Activated T-helper 1 cell treated with anti-CD3 and anti-CD28 coated beads, Interleukin-12 subunit alpha, Interleukin-12 subunit beta, Interleukin-2, Interleukin-4 antibody, amounts not matched to agents 30 ng/mL and 10 ng/mL and 1 ng/mL, durations not matched to agents 14 hours and 24 hours and 36 hours (primary cell): ENCODE measurements at regions of chr1 and their contacts with region 1.

Region 1: DNA sequence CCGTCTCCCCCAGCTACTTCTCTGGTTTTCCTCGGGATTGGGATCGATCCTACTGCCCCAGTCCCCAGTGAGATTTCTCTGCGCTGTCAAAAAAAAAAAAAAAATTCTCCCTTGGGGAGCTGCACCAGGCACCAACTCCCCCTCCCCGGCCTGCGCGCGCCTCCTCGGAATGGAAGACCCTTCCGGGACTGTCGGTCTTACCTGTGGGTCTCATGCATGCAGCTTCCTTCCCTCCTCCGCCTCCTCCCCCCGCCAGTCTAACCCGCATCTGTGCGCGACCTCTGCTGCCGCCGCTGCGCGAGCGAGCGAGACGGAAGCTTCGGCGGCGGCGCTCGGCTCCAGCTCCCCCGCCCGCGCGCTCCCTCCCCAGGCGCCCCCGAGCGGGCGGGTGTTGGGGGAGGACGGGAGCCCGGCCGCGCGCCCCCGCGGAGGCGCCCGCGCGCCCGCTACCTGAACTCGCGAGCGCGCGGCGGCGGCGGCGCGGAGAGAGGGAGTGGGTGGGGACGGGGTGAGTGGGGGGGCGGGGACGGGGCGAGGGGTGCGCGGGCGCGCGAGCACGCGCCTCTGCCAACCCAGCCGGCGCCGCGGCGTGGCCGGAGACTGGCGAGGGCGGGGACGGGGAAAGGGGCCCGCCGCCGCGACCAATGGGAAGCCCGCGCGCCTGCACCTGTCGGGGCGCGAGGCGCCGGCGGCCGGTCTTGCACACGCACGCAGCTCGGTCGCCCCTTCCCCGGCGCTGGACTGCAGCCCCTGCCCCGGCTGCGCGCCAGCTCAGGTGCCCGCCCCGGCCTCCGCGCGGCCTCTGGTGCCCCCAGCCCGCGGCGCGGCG is at the start of gene SUSD4:
- DNase-seq: peak; percentile 13
- H3K4me3 Mint-ChIP-seq: peak within 1 kb of the TSS; percentile 77
- H3K27ac Mint-ChIP-seq: no peak within 1 kb of the TSS
- H3K4me1 Mint-ChIP-seq: no peaks in the 10 kb centered on the region
- H3K27me3 Mint-ChIP-seq: peaks cover 53% of the 10 kb centered on the region
- total RNA-seq, gene SUSD4: not detected in 2 replicates

Region 2: GRCh38 chr1:223199094-223199647 is 164.9 kb before region 1 on chr1:
- intact Hi-C with region 1: loop called (anchors 5 kb)
- DNase-seq: no peak
- H3K4me3 Mint-ChIP-seq: no peak overlapping the region
- H3K27ac Mint-ChIP-seq: no peak overlapping the region
- H3K4me1 Mint-ChIP-seq: no peaks in the 10 kb centered on the region
- H3K27me3 Mint-ChIP-seq: peaks cover 4% of the 10 kb centered on the region

Region 3: GRCh38 chr1:223244366-223245103 is 119.5 kb before region 1 on chr1:
- intact Hi-C with region 1: no loop called
- DNase-seq: no peak
- H3K4me3 Mint-ChIP-seq: no peak overlapping the region
- H3K27ac Mint-ChIP-seq: no peak overlapping the region
- H3K4me1 Mint-ChIP-seq: peaks cover 11% of the 10 kb centered on the region
- H3K27me3 Mint-ChIP-seq: peaks cover 3% of the 10 kb centered on the region